CD4-positive, alpha-beta T cell (primary cell): ENCODE measurements at regions of chr7 and their contacts with region 1.

Region 1: GRCh38 chr7:24912874-24913514 is 67.0 kb downstream of the OSBPL3 start:
- DNase-seq: peak in 3 of 14 experiments; percentile 8 to 52 (median 48)
- ATAC-seq: peak; percentile 13
- H3K4me3 ChIP-seq: no peak overlapping the region
- H3K4me3 Mint-ChIP-seq: no peak overlapping the region
- H3K27ac ChIP-seq: no peak overlapping the region
- H3K27ac Mint-ChIP-seq: no peak overlapping the region
- H3K4me1 ChIP-seq: peaks cover 47% of the 10 kb centered on the region
- H3K4me1 Mint-ChIP-seq: peaks cover 66% of the 10 kb centered on the region
- H3K27me3 ChIP-seq: no peaks in the 10 kb centered on the region
- H3K27me3 Mint-ChIP-seq: no peaks in the 10 kb centered on the region
- CTCF ChIP-seq: no peak

Region 2: DNA sequence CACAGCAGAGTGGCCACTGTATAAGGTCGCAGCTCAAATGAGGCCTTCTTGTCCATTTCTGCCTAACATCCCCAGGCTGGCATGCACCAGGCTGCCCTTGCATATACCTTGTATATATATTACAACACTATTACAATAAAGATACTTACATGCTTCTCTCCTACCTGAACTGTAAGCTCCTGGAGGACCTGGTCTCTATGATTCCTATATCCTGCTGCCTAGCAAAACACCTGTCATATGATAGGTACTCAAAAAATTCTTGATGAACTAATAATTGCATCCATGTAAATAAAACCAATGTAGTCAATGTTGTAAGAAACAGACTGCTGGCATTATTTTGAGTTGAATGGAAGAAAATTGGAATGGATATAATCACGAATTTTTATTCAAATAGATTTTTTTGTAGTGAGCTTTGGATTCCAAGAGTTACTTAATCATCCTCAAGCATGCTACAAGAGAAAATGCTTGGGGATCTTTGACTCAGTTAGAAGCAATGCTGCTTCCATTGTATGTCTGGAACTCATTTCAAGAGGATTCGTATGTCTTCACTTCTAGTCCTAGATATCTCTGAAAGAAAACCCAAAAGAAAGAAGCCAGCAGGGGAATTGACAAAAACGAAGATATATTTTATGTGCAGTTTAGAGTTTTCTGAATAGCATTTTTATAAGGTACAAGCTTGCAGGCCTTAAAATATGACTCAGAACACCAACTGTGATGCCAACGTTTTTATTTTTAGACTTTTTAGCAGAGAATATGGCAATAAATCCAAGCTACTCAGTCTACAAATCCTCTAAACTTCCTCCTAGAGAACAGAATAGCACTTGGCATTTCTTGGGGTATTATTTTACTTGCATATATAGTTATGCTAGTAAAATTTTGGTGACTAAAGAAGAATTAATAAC is 13.9 kb after region 1 on chr7:
- CTCF ChIA-PET with region 1: interaction called, 4 read pairs
- POLR2A ChIA-PET with region 1: interaction called, 9 read pairs
- intact Hi-C with region 1: loop called in 1 of 2 experiments (anchors 1 kb)
- DNase-seq: no peak
- ATAC-seq: no peak
- H3K4me3 ChIP-seq: no peak overlapping the region
- H3K4me3 Mint-ChIP-seq: no peak overlapping the region
- H3K27ac ChIP-seq: no peak overlapping the region
- H3K27ac Mint-ChIP-seq: no peak overlapping the region
- H3K4me1 ChIP-seq: peaks cover 20% of the 10 kb centered on the region
- H3K4me1 Mint-ChIP-seq: peaks cover 66% of the 10 kb centered on the region
- H3K27me3 ChIP-seq: no peaks in the 10 kb centered on the region
- H3K27me3 Mint-ChIP-seq: no peaks in the 10 kb centered on the region
- CTCF ChIP-seq: no peak

Region 3: DNA sequence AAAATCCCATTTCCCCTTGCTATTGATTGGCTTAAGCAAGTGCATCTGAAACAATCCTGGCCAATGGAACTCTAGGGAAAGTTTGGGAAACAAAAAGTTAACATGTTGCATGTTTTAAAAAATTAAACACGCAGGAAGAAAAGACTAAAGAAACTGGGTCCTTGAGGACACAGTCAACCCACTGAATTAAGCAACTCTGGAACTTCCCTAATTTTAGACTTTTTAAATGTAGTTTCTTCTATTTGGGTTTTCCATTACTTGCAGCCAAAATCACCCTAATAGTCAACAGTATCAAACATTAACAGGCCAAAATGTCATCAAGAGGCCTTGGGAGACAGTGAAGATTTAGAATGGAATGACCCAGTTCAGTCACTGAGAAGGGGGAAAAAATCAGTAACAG is 26.4 kb after region 1 on chr7:
- CTCF ChIA-PET with region 1: no interaction called
- POLR2A ChIA-PET with region 1: no interaction called
- intact Hi-C with region 1: no loop called
- DNase-seq: peak in 2 of 14 experiments; percentile 38 to 39
- ATAC-seq: no peak
- H3K4me3 ChIP-seq: no peak overlapping the region
- H3K4me3 Mint-ChIP-seq: no peak overlapping the region
- H3K27ac ChIP-seq: no peak overlapping the region
- H3K27ac Mint-ChIP-seq: no peak overlapping the region
- H3K4me1 ChIP-seq: peaks cover 3% of the 10 kb centered on the region
- H3K4me1 Mint-ChIP-seq: peaks cover 51% of the 10 kb centered on the region
- H3K27me3 ChIP-seq: no peaks in the 10 kb centered on the region
- H3K27me3 Mint-ChIP-seq: no peaks in the 10 kb centered on the region
- CTCF ChIP-seq: no peak